Panc1 (cell line): ENCODE measurements at regions of chr12 and their contacts with region 1.

Region 1: GRCh38 chr12:31238764-31239387 is 87.1 kb downstream of the SINHCAF start:
- DNase-seq: no peak
- ATAC-seq: peak; percentile 90
- H3K4me3 ChIP-seq: no peak overlapping the region
- H3K27ac ChIP-seq: no peak overlapping the region
- H3K4me1 ChIP-seq: no peaks in the 10 kb centered on the region
- H3K27me3 ChIP-seq: peaks cover 29% of the 10 kb centered on the region
- CTCF ChIP-seq: peak; percentile 95

Region 2: GRCh38 chr12:31117203-31118011 is 121.5 kb before region 1 on chr12:
- CTCF ChIA-PET with region 1: interaction called, 3 read pairs
- POLR2A ChIA-PET with region 1: no interaction called
- in situ Hi-C with region 1: no loop called
- intact Hi-C with region 1: loop called (anchors 5 kb)
- DNase-seq: peak; percentile 20
- ATAC-seq: peak; percentile 82
- H3K4me3 ChIP-seq: peak overlapping the region; percentile 46 to 74
- H3K27ac ChIP-seq: no peak overlapping the region
- H3K4me1 ChIP-seq: peaks cover 27% of the 10 kb centered on the region
- H3K27me3 ChIP-seq: no peaks in the 10 kb centered on the region; the same call in 1 of the 2 replicates
- CTCF ChIP-seq: peak; percentile 94